PC-3 (cell line): ENCODE measurements at regions of chr5 and their contacts with region 1.

Region 1: DNA sequence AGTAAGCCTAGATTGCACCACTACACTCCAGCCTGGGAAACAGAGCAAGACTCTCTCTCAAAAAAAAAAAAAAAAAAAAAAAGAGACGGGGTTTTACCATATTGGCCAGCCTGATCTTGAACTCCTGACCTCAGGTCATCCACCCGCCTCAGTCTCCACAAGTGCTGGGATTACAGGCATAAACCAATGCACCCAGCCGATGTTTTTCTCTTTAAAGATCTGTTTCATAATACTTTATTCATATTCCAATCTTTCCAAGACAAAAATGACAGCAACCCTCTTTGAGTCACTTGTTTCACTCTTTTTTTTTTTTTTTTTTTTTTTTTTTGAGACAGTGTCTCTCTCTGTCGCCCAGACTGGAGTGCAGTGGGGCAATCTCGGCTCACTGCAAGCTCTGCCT is 13.6 kb upstream of the LMNB1 start:
- DNase-seq: no peak
- ATAC-seq: no peak
- H3K4me3 ChIP-seq: no peak overlapping the region
- H3K27ac ChIP-seq: no peak overlapping the region
- H3K4me1 ChIP-seq: peaks cover 8% of the 10 kb centered on the region
- H3K27me3 ChIP-seq: no peaks in the 10 kb centered on the region
- CTCF ChIP-seq: no peak

Region 2: GRCh38 chr5:126178521-126178920 is 584.9 kb before region 1 on chr5:
- CTCF ChIA-PET with region 1: no interaction called
- POLR2A ChIA-PET with region 1: no interaction called
- intact Hi-C with region 1: no loop called
- DNase-seq: no peak
- ATAC-seq: no peak
- H3K4me3 ChIP-seq: no peak overlapping the region
- H3K27ac ChIP-seq: no peak overlapping the region
- H3K4me1 ChIP-seq: no peaks in the 10 kb centered on the region
- H3K27me3 ChIP-seq: no peaks in the 10 kb centered on the region
- CTCF ChIP-seq: no peak

Region 3: DNA sequence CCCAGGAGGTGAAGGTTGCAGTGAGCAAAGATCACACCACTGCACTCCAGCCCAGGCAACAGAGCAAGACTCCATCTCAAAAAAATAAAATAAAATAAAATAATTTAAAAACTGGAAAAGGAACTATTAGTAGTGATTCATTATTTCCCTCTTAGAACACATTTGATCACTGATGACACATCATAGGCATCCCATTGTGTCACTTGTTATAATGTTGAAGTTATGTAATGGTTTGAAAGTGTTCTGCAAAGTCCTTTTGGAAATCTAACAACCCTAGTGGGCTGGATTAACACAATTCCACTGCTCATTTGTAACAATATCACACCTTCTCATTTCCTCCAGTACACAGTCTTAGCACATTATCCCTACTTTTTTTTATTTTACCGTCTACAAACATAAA is 68.3 kb before region 1 on chr5:
- CTCF ChIA-PET with region 1: no interaction called
- POLR2A ChIA-PET with region 1: no interaction called
- intact Hi-C with region 1: loop called (anchors 5 kb)
- DNase-seq: no peak
- ATAC-seq: no peak
- H3K4me3 ChIP-seq: no peak overlapping the region
- H3K27ac ChIP-seq: no peak overlapping the region
- H3K4me1 ChIP-seq: no peaks in the 10 kb centered on the region
- H3K27me3 ChIP-seq: no peaks in the 10 kb centered on the region
- CTCF ChIP-seq: no peak

Region 4: GRCh38 chr5:126917918-126918614 is 154.7 kb after region 1 on chr5:
- CTCF ChIA-PET with region 1: no interaction called
- POLR2A ChIA-PET with region 1: no interaction called
- intact Hi-C with region 1: no loop called
- DNase-seq: peak; percentile 87
- ATAC-seq: peak; percentile 92
- H3K4me3 ChIP-seq: no peak overlapping the region
- H3K27ac ChIP-seq: peak overlapping the region; percentile 67
- H3K4me1 ChIP-seq: peaks cover 26% of the 10 kb centered on the region
- H3K27me3 ChIP-seq: no peaks in the 10 kb centered on the region
- CTCF ChIP-seq: no peak